ENCODE measurements at regions of chr14 and their contacts with region 1.

Region 1: DNA sequence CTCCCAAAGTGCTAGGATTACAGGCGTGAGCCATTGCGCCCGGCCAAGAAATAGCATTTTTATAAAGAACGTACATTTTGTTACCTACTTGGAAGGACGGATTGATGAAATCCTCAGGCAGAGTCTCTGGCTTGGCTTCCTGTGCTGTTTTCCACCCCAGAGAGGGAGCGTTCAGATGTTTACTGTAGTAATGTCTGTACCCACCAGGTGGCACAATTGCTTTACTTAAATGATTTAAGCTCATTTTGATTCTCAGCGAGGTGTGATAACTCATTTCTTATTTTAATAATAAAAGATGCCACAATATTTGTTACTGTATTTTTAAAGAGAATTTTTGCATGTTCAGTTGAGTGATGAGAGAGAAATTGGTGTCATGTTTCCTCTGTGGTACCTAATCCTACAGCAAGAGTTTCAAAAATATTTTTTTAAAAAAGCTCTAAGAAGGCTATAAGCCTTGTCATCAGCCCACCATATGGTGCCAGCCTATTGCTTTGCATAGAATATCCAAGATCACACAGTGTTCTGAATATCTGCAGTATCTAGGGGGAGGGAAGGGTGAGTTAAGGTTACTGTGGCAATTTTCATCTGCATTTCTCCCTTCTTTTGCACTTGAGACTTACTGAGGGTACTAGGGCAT is 82.6 kb upstream of the TRAF3 start:
- DNase-seq: no peak
- H3K4me3 ChIP-seq: no peak overlapping the region
- H3K27ac ChIP-seq: no peak overlapping the region
- H3K4me1 ChIP-seq: peaks cover 8 to 46% (median 23%) of the 10 kb centered on the region in 4 donors
- H3K27me3 ChIP-seq: no peaks in the 10 kb centered on the region
- CTCF ChIP-seq: peak; percentile 60 to 81 (median 74)
- EP300 ChIP-seq: no peak
- POLR2A ChIP-seq: no peak

Region 2: GRCh38 chr14:102591889-102592763 is 102.5 kb before region 1 on chr14 and contains the start of gene RCOR1:
- intact Hi-C with region 1: no loop called
- DNase-seq: peak; percentile 99
- H3K4me3 ChIP-seq: peak within 1 kb of the TSS; percentile 76 to 98 (median 90)
- H3K27ac ChIP-seq: peak within 1 kb of the TSS; percentile 90 to 99 (median 96)
- H3K4me1 ChIP-seq: peaks cover 19 to 43% (median 38%) of the 10 kb centered on the region in 4 donors
- H3K27me3 ChIP-seq: no peaks in the 10 kb centered on the region
- CTCF ChIP-seq: no peak
- EP300 ChIP-seq: no peak
- POLR2A ChIP-seq: peak; percentile 9
- total RNA-seq, gene RCOR1: 12.9 to 14.8 (median 13.8) TPM

Region 3: GRCh38 chr14:102675396-102675795 is 19.3 kb before region 1 on chr14:
- intact Hi-C with region 1: no loop called
- DNase-seq: no peak
- H3K4me3 ChIP-seq: no peak overlapping the region
- H3K27ac ChIP-seq: no peak overlapping the region
- H3K4me1 ChIP-seq: no peaks in the 10 kb centered on the region
- H3K27me3 ChIP-seq: no peaks in the 10 kb centered on the region
- CTCF ChIP-seq: no peak
- EP300 ChIP-seq: no peak
- POLR2A ChIP-seq: no peak

Region 4: GRCh38 chr14:102917469-102918211 is 223.0 kb after region 1 on chr14:
- intact Hi-C with region 1: loop called (anchors 2 kb)
- DNase-seq: no peak
- H3K4me3 ChIP-seq: no peak overlapping the region
- H3K27ac ChIP-seq: no peak overlapping the region
- H3K4me1 ChIP-seq: peaks cover under 1 to 3% (median 1%) of the 10 kb centered on the region in 4 donors
- H3K27me3 ChIP-seq: peaks cover 0 to 14% (median 2%) of the 10 kb centered on the region in 4 donors
- CTCF ChIP-seq: peak; percentile 62 to 69 (median 62)
- EP300 ChIP-seq: no peak
- POLR2A ChIP-seq: no peak

Measured in esophagus muscularis mucosa (tissue), 4 donors.